ENCODE measurements at regions of chr6 and their contacts with region 1.

Region 1: DNA sequence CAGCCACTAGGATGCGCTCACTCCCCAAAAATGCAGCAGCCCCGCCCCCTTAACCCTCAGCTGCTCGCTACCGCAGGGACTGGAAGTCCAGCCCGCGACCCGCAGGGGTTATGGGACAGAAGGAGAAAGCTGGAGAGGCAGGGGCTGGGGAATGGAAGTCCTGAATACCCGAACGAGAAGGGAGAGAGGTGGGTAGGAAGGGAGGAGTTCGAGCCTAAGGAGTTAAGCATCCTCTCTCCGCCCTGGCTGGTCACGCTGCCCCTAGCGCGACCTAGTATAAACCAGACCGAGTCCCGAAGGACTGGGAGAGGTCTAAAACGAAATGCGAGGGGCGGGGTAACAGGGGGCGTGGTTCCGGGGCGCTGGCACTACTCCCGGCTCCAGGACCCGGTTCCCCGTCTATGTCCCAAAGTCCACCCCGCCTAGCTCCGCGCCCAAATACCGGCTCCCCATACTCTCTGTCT is 448 bp upstream of the DDAH2 start:
- DNase-seq: peak; percentile 96

Region 2: GRCh38 chr6:31619805-31620585 is 109.6 kb before region 1 on chr6:
- intact Hi-C with region 1: no loop called
- DNase-seq: peak; percentile 98

Region 3: DNA sequence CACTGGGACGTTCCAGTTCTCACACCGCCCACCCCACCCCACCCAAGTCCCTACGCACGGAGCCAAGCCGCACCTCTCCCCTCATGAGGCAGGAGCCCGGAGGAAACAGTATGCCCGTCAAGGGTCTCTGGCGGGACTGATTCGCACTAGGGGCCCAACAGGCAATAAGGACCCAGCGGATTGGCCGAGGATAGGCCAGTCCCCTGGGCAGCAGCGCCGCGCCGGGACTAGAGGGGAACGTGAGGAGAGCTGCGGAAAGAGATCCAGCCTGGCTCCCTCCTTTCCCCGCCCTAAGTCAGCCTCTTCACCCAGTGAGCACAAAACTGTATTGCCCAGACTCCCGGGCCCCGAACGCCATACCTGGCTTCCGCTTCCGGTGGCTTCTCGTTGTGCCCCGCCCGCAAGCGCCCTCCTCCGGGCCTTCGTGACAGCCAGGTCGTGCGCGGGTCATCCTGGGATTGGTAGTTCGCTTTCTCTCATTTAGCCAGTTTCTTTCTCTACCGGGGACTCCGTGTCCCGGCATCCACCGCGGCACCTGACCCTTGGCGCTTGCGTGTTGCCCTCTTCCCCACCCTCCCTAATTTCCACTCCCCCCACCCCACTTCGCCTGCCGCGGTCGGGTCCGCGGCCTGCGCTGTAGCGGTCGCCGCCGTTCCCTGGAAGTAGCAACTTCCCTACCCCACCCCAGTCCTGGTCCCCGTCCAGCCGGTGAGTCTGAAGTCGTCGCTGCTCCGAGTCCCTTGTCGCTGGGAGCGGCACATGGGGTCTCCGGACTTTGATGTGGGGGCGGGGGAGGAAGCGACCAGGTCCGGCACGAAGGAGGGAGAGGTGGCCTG is 63.8 kb before region 1 on chr6 and contains the start of gene CSNK2B:
- intact Hi-C with region 1: no loop called
- DNase-seq: peak; percentile 100
- total RNA-seq, gene CSNK2B: 96.3 TPM

Region 4: DNA sequence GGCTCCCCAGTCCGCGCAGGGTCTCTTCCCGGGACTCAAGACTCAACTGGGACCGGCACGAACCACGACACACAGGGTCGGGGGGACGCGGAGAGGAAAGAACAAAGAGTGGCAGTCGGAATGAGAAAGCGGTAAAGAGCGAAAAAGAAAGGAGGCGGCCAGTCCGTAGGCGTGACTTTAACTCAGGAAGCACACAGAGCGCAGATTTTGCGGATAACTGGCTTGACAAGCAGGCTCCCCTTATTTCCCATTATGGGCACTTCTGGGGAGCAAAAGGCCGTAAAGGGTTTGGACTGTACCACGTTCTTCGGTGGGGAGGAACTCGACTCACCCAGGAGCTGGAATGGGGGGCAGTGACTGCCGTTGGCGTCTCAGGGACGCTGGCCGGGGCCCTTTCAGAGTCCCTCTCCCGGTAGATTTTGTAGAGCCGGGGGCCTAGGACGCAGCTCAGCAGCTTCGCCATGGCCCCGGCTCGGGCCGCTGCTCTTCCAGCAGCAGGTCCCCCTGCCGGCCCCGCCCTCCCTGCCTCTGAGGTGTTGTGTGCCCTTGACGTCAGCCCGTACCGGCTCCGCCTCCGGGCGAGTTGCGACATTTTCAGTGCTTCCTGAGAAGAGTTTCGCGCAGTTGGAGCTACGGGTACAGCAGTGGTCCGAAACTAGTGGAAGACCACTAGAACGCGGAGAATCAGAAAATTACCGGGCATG is 26.6 kb before region 1 on chr6 and contains the start of gene ABHD16A:
- intact Hi-C with region 1: loop called (anchors 2 kb)
- DNase-seq: peak; percentile 100
- total RNA-seq, gene ABHD16A: 26.9 TPM

Region 5: GRCh38 chr6:31763619-31763940 is 34.0 kb after region 1 on chr6:
- intact Hi-C with region 1: loop called (anchors 5 kb)
- DNase-seq: no peak

Region 6: GRCh38 chr6:31834434-31835198 is 105.1 kb after region 1 on chr6:
- intact Hi-C with region 1: loop called (anchors 2 kb)
- DNase-seq: peak; percentile 93

Region 7: GRCh38 chr6:31888276-31889258 is 159.0 kb after region 1 on chr6:
- intact Hi-C with region 1: no loop called
- DNase-seq: no peak

Measured in cardiac septum (tissue), 1 donor.